ENCODE measurements at regions of chr10 and their contacts with region 1.

Region 1: DNA sequence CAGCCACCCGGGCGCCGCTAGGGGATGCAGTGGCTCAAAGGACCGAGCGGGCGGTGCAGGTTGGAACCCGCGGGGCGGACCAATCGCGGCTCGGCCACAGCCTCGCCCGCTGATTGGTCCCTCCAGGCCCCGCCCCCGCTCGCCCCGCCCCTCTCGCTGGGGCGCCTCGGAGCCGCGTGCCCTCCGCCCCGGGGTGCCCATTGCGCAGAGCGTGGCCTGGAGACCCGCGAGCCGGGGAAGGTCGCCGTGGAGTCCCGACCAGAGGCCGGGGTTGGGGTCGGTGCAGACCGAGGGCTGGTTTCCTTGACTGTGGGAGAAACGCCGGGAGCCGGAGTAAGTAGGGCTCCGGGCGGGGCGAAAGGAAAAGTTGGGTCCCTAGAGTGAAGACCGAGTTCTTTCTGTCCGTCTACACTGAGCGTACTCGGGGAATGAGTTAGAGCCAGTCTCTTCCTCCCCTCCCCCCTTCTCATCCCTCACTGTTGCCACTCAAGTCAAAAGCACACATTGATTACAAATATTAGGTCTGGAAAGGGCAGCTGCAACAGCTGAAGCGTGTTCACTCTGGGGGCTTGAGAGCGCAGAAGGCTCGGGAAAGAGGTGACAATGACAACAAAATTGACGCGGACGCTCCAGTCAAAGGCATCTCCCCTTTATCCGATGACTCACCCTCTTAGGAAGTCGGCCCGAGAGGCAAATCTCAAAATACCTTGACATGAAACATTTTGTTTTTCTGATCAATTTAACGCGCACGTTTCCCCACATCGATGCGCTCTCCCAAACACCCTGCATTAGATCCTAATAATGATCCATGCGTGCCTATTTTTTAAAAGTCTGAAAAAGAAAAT is 820 bp upstream of the GATA3 start:
- DNase-seq: peak; percentile 89
- H3K4me3 Mint-ChIP-seq: peak overlapping the region; percentile 89
- H3K27ac Mint-ChIP-seq: peak overlapping the region; percentile 95
- H3K4me1 Mint-ChIP-seq: peaks cover 13% of the 10 kb centered on the region
- H3K27me3 Mint-ChIP-seq: no peaks in the 10 kb centered on the region

Region 2: DNA sequence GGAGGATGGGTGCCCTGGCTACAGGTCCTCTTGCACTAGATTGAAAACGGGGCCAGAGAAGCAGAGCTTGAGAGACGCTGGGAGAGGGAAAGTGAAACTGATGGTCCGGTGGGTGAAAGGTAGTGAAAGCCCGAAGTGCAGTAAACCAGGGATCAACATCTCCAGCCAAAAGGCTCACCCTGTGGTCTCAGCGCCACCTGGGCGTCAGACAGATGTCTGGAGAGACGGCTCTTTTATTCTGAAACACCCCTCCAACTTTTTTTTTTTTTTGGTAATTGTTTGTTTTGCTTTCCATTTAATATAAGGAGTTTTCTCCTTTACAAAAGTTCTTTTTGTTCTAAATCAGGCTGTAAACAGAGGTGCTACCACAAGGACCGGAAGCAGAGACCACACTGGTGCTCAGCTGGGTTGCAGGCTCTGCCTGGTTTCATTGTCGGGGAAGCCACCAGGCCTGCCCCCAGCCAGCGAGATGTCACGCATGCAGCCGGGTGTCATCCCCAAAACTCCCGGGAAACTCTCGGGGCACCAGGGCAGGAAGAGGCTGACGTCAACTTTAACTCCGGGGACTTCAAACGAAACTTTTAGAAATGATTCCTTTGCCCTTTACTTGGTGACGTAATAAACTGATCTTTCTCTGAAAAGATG is 2002.7 kb before region 1 on chr10:
- intact Hi-C with region 1: loop called (anchors 10 kb)
- DNase-seq: peak; percentile 90
- H3K4me3 Mint-ChIP-seq: peak overlapping the region; percentile 85
- H3K27ac Mint-ChIP-seq: peak overlapping the region; percentile 91
- H3K4me1 Mint-ChIP-seq: peaks cover 83% of the 10 kb centered on the region
- H3K27me3 Mint-ChIP-seq: no peaks in the 10 kb centered on the region

Region 3: GRCh38 chr10:7928536-7928935 is 125.1 kb before region 1 on chr10:
- intact Hi-C with region 1: no loop called
- DNase-seq: no peak
- H3K4me3 Mint-ChIP-seq: no peak overlapping the region
- H3K27ac Mint-ChIP-seq: no peak overlapping the region
- H3K4me1 Mint-ChIP-seq: peaks cover 7% of the 10 kb centered on the region
- H3K27me3 Mint-ChIP-seq: no peaks in the 10 kb centered on the region

Region 4: GRCh38 chr10:8065651-8066050 is 12.0 kb after region 1 on chr10:
- intact Hi-C with region 1: loop called (anchors 1 kb)
- DNase-seq: no peak
- H3K4me3 Mint-ChIP-seq: peak overlapping the region; percentile 92
- H3K27ac Mint-ChIP-seq: peak overlapping the region; percentile 94
- H3K4me1 Mint-ChIP-seq: peaks cover 87% of the 10 kb centered on the region
- H3K27me3 Mint-ChIP-seq: no peaks in the 10 kb centered on the region

Region 5: DNA sequence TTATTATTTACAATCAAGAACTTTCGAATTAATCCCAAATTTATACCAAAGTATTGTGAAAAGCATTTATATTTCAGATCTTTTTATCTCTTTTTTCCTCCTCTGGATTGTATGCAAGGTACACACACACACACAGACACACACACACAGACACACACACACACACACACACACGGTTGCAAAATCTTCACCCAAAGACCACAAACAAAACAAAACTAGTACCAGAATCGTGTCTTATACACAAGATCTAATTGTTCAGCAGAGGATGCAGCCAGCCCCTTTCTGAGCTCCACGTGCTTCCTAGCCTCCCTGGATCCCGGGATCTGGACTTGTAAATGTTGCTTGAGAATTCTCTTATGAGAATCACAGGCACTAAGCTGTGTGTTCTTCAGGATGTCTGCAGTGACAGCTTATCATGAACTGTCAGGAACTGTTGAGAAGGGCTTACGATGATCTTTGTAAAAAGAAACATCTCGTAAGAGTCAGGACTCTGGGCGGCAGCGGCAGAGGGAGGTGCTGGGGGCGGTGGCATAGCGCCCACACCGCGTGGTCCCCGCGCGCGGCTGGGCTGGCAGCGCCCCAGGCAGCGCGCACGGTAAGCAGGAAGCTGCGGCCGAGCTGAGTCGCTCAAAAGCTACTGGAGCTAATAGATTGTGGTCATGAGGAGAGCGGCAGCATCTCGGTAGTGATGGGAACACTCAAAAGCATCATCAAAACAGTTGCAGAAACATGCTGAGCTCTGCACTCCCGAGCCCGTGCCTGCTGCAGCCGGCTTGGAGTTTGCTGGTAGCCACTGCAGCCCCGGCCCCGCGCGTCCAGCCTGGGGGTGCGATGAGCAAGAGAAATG is 278.4 kb after region 1 on chr10:
- intact Hi-C with region 1: loop called (anchors 1 kb)
- DNase-seq: peak; percentile 91
- H3K4me3 Mint-ChIP-seq: peak overlapping the region; percentile 90
- H3K27ac Mint-ChIP-seq: peak overlapping the region; percentile 99
- H3K4me1 Mint-ChIP-seq: peaks cover 69% of the 10 kb centered on the region
- H3K27me3 Mint-ChIP-seq: no peaks in the 10 kb centered on the region

Region 6: DNA sequence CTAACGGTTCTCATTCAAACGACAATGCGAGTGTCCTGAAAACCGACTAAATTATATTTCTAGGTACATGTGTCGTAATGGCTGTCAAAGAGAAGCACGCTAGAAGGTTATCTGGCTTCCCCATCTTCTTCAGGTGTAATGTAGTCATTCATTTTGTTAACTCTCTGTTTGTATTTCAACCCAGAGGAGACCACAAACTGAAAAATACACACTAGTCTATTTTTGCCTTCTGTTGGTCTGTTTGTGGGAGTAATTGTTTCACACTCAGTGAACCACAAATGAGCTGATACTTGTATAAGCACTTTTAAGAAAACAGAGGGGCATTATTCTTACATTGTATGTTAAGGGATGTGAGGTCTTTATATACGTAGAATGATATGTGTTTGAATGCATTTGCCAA is 306.7 kb after region 1 on chr10:
- intact Hi-C with region 1: loop called (anchors 1 kb)
- DNase-seq: peak; percentile 37
- H3K4me3 Mint-ChIP-seq: peak overlapping the region; percentile 70
- H3K27ac Mint-ChIP-seq: peak overlapping the region; percentile 88
- H3K4me1 Mint-ChIP-seq: peaks cover 79% of the 10 kb centered on the region
- H3K27me3 Mint-ChIP-seq: no peaks in the 10 kb centered on the region

Region 7: DNA sequence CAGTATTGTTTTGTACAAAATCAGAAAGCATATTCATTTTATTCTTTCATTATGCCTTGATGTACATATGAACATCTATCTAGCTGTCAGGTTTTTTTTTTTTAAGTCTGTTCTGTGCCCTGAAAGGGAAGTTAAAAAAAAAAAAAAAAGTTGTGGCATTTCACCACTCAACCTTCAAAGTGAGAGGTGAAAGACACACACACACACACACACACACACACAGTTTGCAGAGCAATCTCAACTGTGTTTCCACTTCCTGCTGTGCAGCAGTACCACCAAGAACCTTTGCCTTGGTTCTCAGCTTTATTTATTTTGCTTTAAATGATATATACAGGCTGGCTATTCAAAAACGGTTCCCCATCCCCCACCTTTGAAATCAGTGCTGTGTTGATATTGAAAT is 956.4 kb after region 1 on chr10:
- intact Hi-C with region 1: loop called (anchors 5 kb)
- DNase-seq: peak; percentile 55
- H3K4me3 Mint-ChIP-seq: peak overlapping the region; percentile 5
- H3K27ac Mint-ChIP-seq: peak overlapping the region; percentile 84
- H3K4me1 Mint-ChIP-seq: peaks cover 79% of the 10 kb centered on the region
- H3K27me3 Mint-ChIP-seq: no peaks in the 10 kb centered on the region

Region 8: GRCh38 chr10:9081253-9081652 is 1027.6 kb after region 1 on chr10:
- intact Hi-C with region 1: loop called (anchors 5 kb)
- DNase-seq: no peak
- H3K4me3 Mint-ChIP-seq: peak overlapping the region; percentile 6
- H3K27ac Mint-ChIP-seq: peak overlapping the region; percentile 10
- H3K4me1 Mint-ChIP-seq: peaks cover 44% of the 10 kb centered on the region
- H3K27me3 Mint-ChIP-seq: no peaks in the 10 kb centered on the region